MCF 10A (cell line): ENCODE measurements at regions of chr1 and their contacts with region 1.

Region 1: GRCh38 chr1:118960026-118960561 is 28.0 kb downstream of the TBX15 start:
- DNase-seq: no peak
- H3K4me3 Mint-ChIP-seq: no peak overlapping the region
- H3K27ac Mint-ChIP-seq: no peak overlapping the region
- H3K4me1 Mint-ChIP-seq: peaks cover 24% of the 10 kb centered on the region
- H3K27me3 Mint-ChIP-seq: no peaks in the 10 kb centered on the region
- CTCF ChIP-seq: no peak

Region 2: DNA sequence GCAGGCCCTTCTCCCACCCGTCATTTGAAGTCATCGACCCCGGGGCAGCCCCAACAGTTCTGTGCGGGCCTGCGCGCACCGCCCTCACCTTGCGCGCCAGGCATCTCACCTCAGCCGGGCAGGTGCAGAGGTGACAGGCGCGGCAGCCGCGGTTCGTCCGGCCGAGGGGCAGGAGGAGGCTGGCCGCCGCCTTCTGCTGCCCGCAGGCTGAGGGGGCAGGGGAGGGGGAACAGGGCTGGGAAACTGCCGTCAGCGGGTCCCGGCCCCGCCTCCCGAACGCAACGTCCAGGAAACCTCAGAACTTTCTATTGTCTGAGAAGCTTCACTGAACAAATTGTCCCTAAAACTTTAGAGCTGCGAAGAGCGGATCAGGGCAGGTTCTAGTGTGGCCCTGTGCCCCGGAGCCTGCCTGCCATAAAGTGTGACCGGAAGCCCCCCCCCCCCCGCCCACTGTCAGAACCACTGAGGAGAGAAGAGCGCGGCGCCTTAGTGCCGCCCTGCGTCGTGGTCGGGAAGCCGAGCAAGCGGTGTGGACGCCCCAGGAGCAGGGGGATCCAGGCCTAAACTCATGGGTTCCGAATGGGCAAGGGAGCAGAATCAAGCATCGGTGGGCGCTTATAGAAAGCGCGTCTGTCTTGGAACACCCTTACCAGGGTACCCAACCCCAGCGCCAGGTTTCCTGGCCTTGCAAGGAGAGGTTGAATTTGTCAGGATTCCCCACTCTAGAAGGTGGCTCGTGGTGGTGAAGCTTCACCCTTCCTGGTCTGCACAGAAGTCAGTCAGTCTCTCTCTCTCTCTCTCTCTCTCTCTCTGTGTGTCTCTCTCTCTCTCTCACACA is 41.3 kb after region 1 on chr1:
- CTCF ChIA-PET with region 1: no interaction called
- POLR2A ChIA-PET with region 1: no interaction called
- intact Hi-C with region 1: loop called (anchors 5 kb)
- DNase-seq: no peak
- H3K4me3 Mint-ChIP-seq: peak overlapping the region; percentile 67
- H3K27ac Mint-ChIP-seq: peak overlapping the region; percentile 92
- H3K4me1 Mint-ChIP-seq: peaks cover 9% of the 10 kb centered on the region
- H3K27me3 Mint-ChIP-seq: no peaks in the 10 kb centered on the region
- CTCF ChIP-seq: no peak